ENCODE measurements at regions of chr7 and their contacts with region 1.

Region 1: GRCh38 chr7:24572997-24573625 is at the start of gene PALS2:
- DNase-seq: peak; percentile 94
- H3K4me3 Mint-ChIP-seq: peak within 1 kb of the TSS; percentile 99
- H3K27ac Mint-ChIP-seq: peak within 1 kb of the TSS; percentile 89
- H3K4me1 Mint-ChIP-seq: peaks cover 32% of the 10 kb centered on the region
- H3K27me3 Mint-ChIP-seq: peaks cover 47% of the 10 kb centered on the region
- total RNA-seq, gene PALS2: 38.5 and 39.5 TPM in 2 replicates

Region 2: DNA sequence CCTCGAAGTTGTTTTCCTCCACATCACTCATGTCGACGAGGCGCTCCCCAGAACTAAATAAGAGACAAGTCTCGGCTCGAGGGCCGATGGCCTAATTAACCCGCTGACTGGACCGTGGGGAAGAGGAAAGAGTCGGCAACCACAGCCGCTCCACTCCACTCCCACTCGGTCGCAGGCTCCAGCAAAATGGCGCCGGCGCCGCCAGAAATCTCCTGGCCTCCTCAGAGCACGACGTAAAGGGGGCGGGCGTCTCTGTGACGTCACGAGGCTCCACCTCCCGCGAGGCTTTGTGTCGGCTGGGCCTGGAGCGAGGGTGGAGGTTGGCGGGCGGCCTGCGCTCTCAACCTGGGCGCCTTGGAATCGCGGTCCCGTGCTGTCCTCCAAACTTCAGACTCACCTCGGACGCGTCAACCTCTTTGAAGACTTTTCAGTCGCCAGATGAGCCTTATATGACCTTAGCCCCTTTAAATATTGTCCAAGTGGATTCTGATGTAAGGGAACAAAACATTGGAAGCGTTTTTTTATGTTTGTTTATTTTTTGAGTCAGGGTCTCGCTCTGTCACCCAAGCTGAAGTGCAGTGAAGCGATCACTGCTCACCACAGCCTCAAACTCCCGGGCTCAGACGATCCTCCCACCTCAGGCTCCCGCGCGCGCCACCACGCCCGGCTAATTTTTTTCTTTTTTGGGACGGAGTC is 1041.2 kb before region 1 on chr7 and contains the start of gene TRA2A:
- intact Hi-C with region 1: loop called (anchors 2 kb)
- DNase-seq: peak; percentile 99
- H3K4me3 Mint-ChIP-seq: peak within 1 kb of the TSS; percentile 97
- H3K27ac Mint-ChIP-seq: peak within 1 kb of the TSS; percentile 99
- H3K4me1 Mint-ChIP-seq: peaks cover 29% of the 10 kb centered on the region
- H3K27me3 Mint-ChIP-seq: no peaks in the 10 kb centered on the region
- total RNA-seq, gene TRA2A: 96.8 and 103 TPM in 2 replicates

Region 3: DNA sequence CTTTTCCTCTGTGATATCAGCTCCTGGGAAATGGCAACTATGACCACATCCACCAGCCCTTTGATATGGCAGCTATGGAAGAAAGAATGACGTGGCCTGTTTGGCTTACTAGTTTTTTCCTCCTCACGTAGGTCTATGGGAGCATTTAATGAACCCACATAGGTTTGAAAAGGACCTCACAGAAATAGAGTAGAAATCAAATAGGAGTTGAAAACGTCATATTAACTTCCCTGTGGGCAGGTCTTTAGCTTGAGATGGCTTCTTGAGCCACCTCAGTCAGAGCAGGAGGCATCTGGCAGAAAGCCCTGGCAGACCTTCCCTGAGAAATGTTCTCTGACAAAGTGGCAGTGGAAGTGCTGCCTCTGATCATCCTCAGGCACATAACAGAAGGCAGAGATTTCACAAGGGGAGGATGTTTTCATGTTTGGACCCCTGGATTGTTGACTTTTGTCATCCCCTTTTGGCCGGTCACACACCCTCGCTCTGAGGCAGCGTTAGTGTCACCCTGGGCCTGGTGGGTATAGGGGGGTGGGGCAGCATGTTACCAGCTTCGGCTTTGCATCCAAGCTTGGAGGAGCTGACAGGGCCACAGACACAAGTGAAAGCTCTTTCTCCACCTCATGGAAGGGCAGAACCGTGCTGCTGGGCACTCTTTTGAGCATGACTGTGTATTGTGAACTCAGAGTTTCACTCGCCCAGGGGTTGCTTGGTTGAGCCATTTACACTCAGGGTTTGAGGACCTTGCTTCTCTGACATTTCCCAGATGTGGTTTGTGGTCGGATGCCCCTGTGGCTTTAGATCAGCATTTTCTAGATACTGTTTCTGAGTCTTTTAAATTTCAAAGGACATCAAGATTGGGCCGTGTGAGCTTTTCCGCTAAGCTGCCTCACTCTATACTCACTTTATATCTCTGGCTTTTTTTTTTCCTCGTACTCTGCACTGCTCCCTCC is 678.9 kb before region 1 on chr7:
- intact Hi-C with region 1: loop called (anchors 10 kb)
- DNase-seq: peak; percentile 83
- H3K4me3 Mint-ChIP-seq: peak overlapping the region; percentile 69
- H3K27ac Mint-ChIP-seq: peak overlapping the region; percentile 88
- H3K4me1 Mint-ChIP-seq: peaks cover 29% of the 10 kb centered on the region
- H3K27me3 Mint-ChIP-seq: peaks cover 16% of the 10 kb centered on the region

Region 4: GRCh38 chr7:24017519-24017918 is 555.6 kb before region 1 on chr7:
- intact Hi-C with region 1: no loop called
- DNase-seq: no peak
- H3K4me3 Mint-ChIP-seq: no peak overlapping the region
- H3K27ac Mint-ChIP-seq: no peak overlapping the region
- H3K4me1 Mint-ChIP-seq: no peaks in the 10 kb centered on the region
- H3K27me3 Mint-ChIP-seq: peaks cover 1% of the 10 kb centered on the region

Region 5: GRCh38 chr7:24536682-24537081 is 36.4 kb before region 1 on chr7:
- intact Hi-C with region 1: no loop called
- DNase-seq: no peak
- H3K4me3 Mint-ChIP-seq: no peak overlapping the region
- H3K27ac Mint-ChIP-seq: no peak overlapping the region
- H3K4me1 Mint-ChIP-seq: no peaks in the 10 kb centered on the region
- H3K27me3 Mint-ChIP-seq: peaks cover 11% of the 10 kb centered on the region

Region 6: GRCh38 chr7:24587848-24588247 is 14.7 kb after region 1 on chr7:
- intact Hi-C with region 1: loop called (anchors 2 kb)
- DNase-seq: peak; percentile 80
- H3K4me3 Mint-ChIP-seq: no peak overlapping the region
- H3K27ac Mint-ChIP-seq: no peak overlapping the region
- H3K4me1 Mint-ChIP-seq: peaks cover 23% of the 10 kb centered on the region
- H3K27me3 Mint-ChIP-seq: no peaks in the 10 kb centered on the region

Region 7: DNA sequence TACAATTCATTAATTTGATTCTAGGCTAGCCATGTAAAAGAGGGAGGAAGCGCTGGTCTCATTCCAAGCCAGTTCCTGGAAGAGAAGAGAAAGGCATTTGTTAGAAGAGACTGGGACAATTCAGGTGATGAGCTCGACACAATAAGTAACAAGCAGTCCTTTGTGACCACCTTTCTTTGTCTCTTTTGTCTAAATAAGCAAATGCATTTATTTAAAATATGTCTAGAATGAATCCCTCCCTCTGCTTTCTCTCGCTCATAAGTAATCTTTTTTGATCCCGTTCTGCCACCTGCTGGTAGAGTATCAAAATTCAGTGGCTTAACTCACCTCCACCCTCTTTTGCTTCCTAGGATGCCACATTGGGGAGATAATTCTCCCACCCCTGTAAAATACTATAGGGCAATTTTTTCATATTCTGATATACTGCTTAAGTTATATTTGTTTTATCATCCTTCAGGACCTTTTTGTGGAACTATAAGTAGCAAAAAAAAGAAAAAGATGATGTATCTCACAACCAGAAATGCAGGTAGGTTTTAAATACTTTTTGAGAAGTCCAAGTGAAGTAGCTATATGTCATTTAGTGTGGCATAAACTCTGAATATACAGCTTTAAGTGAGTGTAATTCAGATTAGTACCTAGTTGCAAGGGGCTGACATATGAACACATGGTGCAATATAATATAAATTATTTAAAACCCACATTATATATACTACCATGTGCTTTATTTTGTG is 92.6 kb after region 1 on chr7:
- intact Hi-C with region 1: loop called (anchors 1 kb)
- DNase-seq: peak; percentile 86
- H3K4me3 Mint-ChIP-seq: no peak overlapping the region
- H3K27ac Mint-ChIP-seq: no peak overlapping the region
- H3K4me1 Mint-ChIP-seq: peaks cover 1% of the 10 kb centered on the region
- H3K27me3 Mint-ChIP-seq: no peaks in the 10 kb centered on the region

Region 8: DNA sequence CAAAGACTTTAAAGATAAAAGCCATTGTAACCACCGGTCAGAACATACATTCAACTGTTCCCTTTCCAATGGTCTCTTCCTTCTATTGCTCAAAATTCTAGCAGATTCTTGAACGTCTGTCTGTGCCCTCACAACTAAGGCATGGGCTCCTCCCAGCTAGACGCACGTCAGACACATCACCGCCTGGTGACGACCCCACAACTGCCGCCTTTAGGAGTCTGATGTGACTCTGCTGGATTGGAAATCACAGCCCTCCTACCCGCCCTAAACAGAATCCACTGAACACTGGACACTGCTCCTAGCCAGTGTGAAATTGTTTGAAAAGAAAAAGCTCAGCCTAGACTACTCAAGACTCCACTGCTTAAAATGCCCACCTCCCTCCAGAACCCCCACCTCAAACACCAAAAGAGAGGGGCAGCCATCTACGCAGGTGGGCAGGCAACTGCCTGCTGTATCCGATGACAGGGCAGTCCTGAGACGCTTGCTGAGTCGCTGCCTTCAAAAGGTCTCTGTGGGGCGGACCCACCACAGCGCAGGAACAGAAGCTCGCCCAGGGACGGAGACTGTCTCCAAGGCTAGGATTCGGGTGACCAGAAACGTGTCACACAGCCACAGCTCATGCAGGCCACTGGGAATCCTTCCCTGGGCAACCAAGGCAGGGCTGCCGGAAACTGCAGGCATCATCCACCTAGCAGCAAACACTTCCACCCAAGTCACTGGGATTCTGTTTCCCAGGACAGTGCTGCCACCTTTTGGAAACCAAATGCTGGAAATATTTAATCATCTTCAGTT is 149.5 kb after region 1 on chr7:
- intact Hi-C with region 1: no loop called
- DNase-seq: no peak
- H3K4me3 Mint-ChIP-seq: no peak overlapping the region
- H3K27ac Mint-ChIP-seq: no peak overlapping the region
- H3K4me1 Mint-ChIP-seq: peaks cover 11% of the 10 kb centered on the region
- H3K27me3 Mint-ChIP-seq: peaks cover 2% of the 10 kb centered on the region

Region 9: GRCh38 chr7:24907311-24907886 is 334.3 kb after region 1 on chr7:
- intact Hi-C with region 1: loop called (anchors 10 kb)
- DNase-seq: peak; percentile 84
- H3K4me3 Mint-ChIP-seq: no peak overlapping the region
- H3K27ac Mint-ChIP-seq: no peak overlapping the region
- H3K4me1 Mint-ChIP-seq: peaks cover 33% of the 10 kb centered on the region
- H3K27me3 Mint-ChIP-seq: no peaks in the 10 kb centered on the region

Region 10: DNA sequence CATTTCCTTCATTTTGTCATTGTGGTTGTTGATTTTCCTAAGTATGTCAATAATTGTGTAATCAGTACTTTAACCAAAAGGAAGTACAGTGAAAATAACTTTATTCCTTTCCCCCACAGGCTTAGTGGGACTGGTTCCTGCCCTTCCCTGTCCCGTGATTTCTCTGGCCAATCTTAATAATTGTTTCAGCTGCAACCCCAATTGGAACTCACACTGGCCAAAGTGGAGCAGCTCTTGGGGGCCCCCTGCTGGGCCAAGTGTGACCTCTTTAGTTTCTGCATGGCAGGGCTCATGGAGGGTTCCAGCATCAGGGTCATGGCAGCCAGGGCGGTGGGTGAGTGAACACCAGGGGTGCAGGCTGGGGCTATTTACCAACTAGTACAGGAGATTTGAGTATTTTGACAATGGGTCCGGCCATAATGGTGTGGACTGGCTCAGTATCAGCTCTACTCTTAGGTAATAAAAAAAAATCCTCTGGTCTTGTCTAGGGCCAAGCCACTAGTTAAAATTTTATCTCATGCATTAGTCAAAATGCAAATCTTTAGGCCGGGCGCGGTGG is 520.2 kb after region 1 on chr7:
- intact Hi-C with region 1: loop called (anchors 2 kb)
- DNase-seq: peak; percentile 94
- H3K4me3 Mint-ChIP-seq: no peak overlapping the region
- H3K27ac Mint-ChIP-seq: no peak overlapping the region
- H3K4me1 Mint-ChIP-seq: peaks cover 13% of the 10 kb centered on the region
- H3K27me3 Mint-ChIP-seq: peaks cover 7% of the 10 kb centered on the region

Measured in activated CD4-positive, alpha-beta T cell treated with anti-CD3 and anti-CD28 coated beads, Interleukin-2, amount 10 ng/mL, durations not matched to agents 24 days and 14 days (primary cell).